A549 (cell line): ENCODE measurements at regions of chr2 and their contacts with region 1.

Region 1: DNA sequence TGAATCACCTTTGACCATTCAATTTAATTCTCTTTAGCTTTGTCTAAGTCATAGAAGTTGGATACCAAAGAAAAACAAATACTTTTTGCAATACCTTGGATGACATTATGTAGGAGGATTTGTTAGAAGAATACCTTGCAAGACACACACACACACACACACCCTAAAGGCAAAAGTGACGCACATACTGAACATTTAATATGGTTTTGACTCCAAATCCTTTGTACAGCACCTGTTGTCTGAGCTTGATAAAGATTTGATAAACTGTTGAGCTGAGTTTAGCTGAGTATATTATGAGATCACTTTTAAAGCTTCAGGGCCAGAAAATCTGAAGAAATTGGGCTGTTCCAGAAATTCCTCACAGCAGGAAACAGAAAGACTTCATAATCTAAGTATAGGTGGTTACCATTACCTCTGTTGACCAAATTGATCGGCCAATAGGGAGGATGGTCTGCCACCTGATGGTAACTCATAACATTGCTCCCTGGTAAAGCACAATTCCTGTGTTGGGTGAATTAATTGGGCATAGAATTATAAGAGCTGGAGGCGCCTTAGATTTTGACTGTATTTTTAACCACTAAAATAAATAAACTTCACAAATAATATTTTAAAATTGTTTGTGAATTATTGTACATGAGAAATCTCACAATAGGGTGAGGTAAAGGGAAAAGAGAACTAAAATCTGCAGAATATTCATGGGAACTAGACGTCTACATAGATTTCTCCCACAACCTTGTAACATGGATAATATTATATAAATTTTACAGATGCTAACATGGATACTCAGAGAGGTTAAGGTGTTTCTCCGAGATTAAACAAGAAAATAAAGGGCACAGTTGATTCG is 21.9 kb upstream of the RPIA start:
- DNase-seq: peak; percentile 49 to 56
- ATAC-seq: peak; percentile 62 to 81; a peak in 5 of 6 replicates
- H3K4me3 ChIP-seq: no peak overlapping the region
- H3K27ac ChIP-seq: no peak overlapping the region
- H3K4me1 ChIP-seq: peaks cover 8% of the 10 kb centered on the region; the same call in 2 of the 3 replicates
- CTCF ChIP-seq: peak; percentile 61
- EP300 ChIP-seq: no peak
- POLR2A ChIP-seq: no peak
- RAD21 ChIP-seq: peak; percentile 63 to 69

Region 2: DNA sequence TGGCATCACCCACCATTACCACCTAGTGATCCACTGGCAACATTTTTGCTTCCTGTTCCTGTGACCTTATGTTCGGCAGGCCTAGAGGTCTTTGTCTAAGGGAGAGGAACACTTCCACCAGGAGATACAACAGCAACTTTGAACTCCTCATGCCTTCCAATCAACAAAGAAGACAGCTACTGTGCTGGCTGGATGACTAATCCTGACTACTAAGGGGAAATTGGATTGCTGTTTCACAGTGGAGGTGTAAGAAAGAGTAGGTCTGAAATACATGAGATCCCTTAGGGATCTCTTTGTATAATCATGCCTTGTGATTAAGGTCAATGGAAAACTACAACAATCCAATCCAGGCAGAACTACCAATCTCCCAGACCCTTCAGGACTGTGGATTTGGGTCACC is 87.6 kb before region 1 on chr2:
- CTCF ChIA-PET with region 1: interaction called, 125 read pairs
- POLR2A ChIA-PET with region 1: no interaction called
- DNase-seq: no peak
- ATAC-seq: no peak
- H3K4me3 ChIP-seq: no peak overlapping the region
- H3K27ac ChIP-seq: no peak overlapping the region
- H3K4me1 ChIP-seq: no peaks in the 10 kb centered on the region
- CTCF ChIP-seq: no peak
- EP300 ChIP-seq: no peak
- POLR2A ChIP-seq: no peak
- RAD21 ChIP-seq: no peak

Region 3: GRCh38 chr2:88596141-88596830 is 73.3 kb before region 1 on chr2:
- CTCF ChIA-PET with region 1: interaction called, 125 read pairs
- POLR2A ChIA-PET with region 1: no interaction called
- DNase-seq: no peak
- ATAC-seq: no peak
- H3K4me3 ChIP-seq: no peak overlapping the region
- H3K27ac ChIP-seq: no peak overlapping the region
- H3K4me1 ChIP-seq: peaks cover 21% of the 10 kb centered on the region
- CTCF ChIP-seq: no peak
- EP300 ChIP-seq: no peak
- POLR2A ChIP-seq: no peak
- RAD21 ChIP-seq: no peak

Region 4: DNA sequence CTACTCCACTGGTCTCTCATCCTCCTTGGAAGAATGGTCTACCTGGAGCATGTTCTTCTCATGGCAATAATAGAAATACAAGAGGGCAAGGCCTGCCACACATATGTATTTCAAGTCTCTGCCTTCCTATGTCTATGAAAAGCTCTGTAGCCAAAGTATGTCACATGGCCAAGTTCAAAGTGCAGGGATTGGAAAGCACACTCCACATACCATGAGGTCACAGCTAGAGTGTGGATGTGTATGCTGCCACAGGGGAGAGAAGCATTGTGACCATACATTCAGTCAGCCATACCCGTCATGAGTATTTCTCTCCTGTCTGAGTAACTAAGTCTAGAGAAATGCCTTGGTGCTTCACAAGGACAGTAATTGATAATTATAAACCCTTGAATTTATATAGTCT is 33.6 kb before region 1 on chr2:
- CTCF ChIA-PET with region 1: interaction called, 21 read pairs
- POLR2A ChIA-PET with region 1: no interaction called
- DNase-seq: no peak
- ATAC-seq: no peak; a peak in 1 of 6 replicates
- H3K4me3 ChIP-seq: no peak overlapping the region
- H3K27ac ChIP-seq: no peak overlapping the region
- H3K4me1 ChIP-seq: no peaks in the 10 kb centered on the region
- CTCF ChIP-seq: no peak
- EP300 ChIP-seq: no peak
- POLR2A ChIP-seq: no peak
- RAD21 ChIP-seq: no peak

Region 5: GRCh38 chr2:88659538-88659916 is 10.1 kb before region 1 on chr2:
- CTCF ChIA-PET with region 1: interaction called, 90 read pairs
- POLR2A ChIA-PET with region 1: no interaction called
- DNase-seq: peak in 1 of 2 experiments; percentile 16
- ATAC-seq: peak in 1 of 2 experiments; percentile 49; a peak in 2 of 6 replicates
- H3K4me3 ChIP-seq: no peak overlapping the region
- H3K27ac ChIP-seq: peak overlapping the region in 1 of 2 experiments; percentile 30; a peak in 2 of 6 replicates
- H3K4me1 ChIP-seq: peaks cover 23% of the 10 kb centered on the region
- CTCF ChIP-seq: no peak
- EP300 ChIP-seq: no peak
- POLR2A ChIP-seq: no peak
- RAD21 ChIP-seq: no peak

Region 6: DNA sequence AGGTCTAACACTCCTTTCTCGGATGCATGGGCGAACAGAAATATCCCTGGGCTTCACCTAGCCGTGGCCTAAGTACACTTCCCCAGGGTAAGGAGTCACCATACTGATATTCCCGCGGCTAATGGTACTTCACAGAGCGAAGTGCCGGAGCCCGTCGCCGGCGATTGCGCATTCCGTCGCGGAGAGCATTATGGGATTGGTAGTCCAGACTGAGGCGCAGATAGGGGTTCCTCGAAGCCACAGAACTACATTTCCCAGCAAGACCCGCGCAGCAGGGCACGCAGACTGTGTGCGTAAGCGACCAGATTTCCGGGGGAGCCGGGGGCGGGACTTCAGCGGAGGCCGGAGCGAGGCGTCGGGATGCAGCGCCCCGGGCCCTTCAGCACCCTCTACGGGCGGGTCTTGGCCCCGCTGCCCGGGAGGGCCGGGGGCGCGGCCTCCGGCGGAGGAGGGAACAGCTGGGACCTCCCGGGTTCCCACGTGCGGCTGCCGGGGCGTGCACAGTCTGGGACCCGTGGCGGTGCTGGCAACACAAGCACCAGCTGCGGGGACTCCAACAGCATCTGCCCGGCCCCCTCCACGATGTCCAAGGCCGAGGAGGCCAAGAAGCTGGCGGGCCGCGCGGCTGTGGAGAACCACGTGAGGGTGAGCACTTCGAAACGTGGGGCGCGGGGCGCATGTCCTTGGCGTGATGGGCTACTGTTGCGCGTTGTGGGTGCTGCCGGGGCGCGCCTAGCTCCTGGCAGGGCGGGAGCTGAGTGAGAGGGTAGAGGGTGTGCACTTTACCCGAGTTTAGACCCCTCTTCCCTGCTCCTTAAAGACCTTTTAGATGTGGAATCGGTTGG is 22.0 kb after region 1 on chr2 and contains the start of gene RPIA:
- CTCF ChIA-PET with region 1: interaction called, 51 read pairs
- POLR2A ChIA-PET with region 1: interaction called, 4 read pairs
- DNase-seq: peak; percentile 94 to 99
- ATAC-seq: peak; percentile 93 to 98
- H3K4me3 ChIP-seq: peak within 1 kb of the TSS; percentile 65
- H3K27ac ChIP-seq: peak within 1 kb of the TSS; percentile 91 to 92
- H3K4me1 ChIP-seq: peaks cover 4% of the 10 kb centered on the region; the same call in 2 of the 3 replicates
- CTCF ChIP-seq: peak; percentile 61
- EP300 ChIP-seq: no peak
- POLR2A ChIP-seq: peak; percentile 82
- RAD21 ChIP-seq: peak in 1 of 2 experiments; percentile 22; a peak in 2 of 5 replicates
- polyA plus RNA-seq, gene RPIA: 19.1 and 27.0 TPM in 2 replicates